ENCODE measurements at regions of chr5 and their contacts with region 1.

Region 1: DNA sequence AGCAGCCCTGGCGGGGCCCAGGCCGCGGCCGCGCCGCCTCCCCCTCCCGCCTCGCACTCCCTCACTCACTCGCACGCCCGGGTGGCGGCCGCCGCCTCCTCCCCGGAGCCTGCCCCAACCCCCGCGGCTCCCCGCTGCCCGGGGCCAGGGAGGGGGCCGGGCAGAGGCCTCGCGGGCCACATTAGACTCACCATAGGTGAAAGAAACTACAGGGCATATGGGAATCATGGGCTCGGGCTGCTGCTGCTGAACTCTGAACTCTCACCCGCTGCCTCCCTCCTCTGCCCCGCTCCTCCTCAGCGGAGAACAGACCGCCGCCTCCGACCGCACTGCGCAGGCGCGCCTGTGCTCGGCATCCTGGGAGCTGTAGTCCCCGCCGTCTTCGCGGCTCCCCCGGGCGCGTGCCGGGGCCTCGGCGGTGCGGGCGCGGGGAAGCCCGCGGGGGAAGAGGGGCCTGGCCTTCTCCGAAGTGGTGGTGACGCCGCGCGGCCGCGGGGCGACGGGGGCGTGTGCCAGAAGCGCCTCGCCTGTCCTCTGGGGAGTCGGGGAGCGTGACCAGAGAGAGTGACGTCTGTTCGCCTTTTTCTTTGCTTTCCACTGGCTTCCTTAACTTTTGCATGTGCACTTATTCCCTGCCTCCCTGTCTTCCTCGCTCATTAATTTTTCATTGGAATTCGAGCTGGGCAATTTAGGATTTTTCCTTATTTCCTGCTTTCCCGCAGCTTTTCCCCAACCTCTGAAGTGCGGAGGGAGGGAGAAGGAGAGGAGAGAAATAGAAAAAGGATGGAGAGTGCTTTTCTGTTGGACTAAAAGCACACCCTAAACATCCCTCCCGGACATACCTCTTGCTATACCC is at the start of gene ZFR:
- DNase-seq: peak; percentile 94
- ATAC-seq: peak; percentile 80
- H3K4me3 ChIP-seq: peak within 1 kb of the TSS; percentile 55 to 91 (median 76)
- H3K4me3 Mint-ChIP-seq: peak within 1 kb of the TSS; percentile 93
- H3K27ac ChIP-seq: peak within 1 kb of the TSS; percentile 88 to 92
- H3K27ac Mint-ChIP-seq: peak within 1 kb of the TSS; percentile 96
- H3K4me1 ChIP-seq: peaks cover 36 to 42% of the 10 kb centered on the region in 2 donors
- H3K4me1 Mint-ChIP-seq: peaks cover 59% of the 10 kb centered on the region
- H3K27me3 ChIP-seq: no peaks in the 10 kb centered on the region
- H3K27me3 Mint-ChIP-seq: no peaks in the 10 kb centered on the region
- CTCF ChIP-seq: no peak
- total RNA-seq, gene ZFR: 69.0 and 74.6 TPM in 2 replicates

Region 2: GRCh38 chr5:31531888-31532710 is 912.6 kb before region 1 on chr5 and contains the starts of genes C5orf22 and DROSHA:
- CTCF ChIA-PET with region 1: no interaction called
- POLR2A ChIA-PET with region 1: no interaction called
- intact Hi-C with region 1: loop called (anchors 5 kb)
- DNase-seq: peak; percentile 90
- ATAC-seq: peak; percentile 98
- H3K4me3 ChIP-seq: peak within 1 kb of the TSS; percentile 64 to 94 (median 91)
- H3K4me3 Mint-ChIP-seq: peak within 1 kb of the TSS; percentile 100
- H3K27ac ChIP-seq: peak within 1 kb of the TSS; percentile 29 to 70
- H3K27ac Mint-ChIP-seq: peak within 1 kb of the TSS; percentile 94
- H3K4me1 ChIP-seq: peaks cover 23% of the 10 kb centered on the region in 2 donors
- H3K4me1 Mint-ChIP-seq: peaks cover 38% of the 10 kb centered on the region
- H3K27me3 ChIP-seq: no peaks in the 10 kb centered on the region
- H3K27me3 Mint-ChIP-seq: no peaks in the 10 kb centered on the region
- CTCF ChIP-seq: no peak
- total RNA-seq, gene C5orf22: 28.2 and 28.9 TPM in 2 replicates
- total RNA-seq, gene DROSHA: 62.4 and 65.4 TPM in 2 replicates

Region 3: DNA sequence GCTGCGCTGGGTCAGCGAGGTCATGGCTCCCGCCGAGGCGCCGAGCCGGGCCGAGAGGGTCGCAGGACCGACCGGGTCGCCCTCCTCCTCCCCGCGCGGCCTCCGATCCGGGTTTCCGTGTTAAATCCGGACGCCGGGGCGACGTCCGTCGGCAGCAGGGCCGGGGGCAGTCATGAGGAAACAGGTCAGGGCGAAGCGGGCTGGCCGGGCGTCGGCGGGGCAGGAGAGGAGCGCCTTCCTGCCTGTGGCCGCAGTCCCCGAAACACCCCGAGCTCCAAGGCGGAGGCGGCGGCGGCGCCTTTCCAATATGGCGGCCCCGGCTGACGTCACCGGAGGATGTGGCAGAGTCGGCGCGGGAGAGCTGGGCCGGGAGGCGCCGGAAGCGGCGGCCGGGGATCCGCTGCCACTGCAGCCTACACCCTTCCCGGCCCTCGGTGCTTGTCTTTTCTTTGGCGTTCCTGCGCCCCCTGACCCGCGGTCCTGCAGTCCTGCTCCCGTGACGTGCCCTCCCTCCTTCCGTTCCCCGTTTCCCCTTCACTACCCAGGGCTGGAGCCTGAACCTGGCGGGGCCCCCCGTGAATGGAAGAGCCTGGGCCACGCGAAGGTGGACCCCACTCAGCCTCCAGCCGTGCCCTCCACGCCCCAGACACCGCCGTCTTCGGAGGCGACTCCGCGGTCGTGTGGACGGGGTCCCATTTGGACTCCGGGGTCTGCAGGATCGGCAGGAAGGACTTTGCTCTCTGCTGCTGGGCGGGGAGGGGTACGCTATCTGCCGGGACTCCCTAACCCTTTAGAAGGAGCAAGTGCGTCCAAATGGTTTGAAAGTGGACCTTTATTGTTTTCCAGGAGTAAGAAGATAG is 270.4 kb before region 1 on chr5 and contains the start of gene GOLPH3:
- CTCF ChIA-PET with region 1: no interaction called
- POLR2A ChIA-PET with region 1: interaction called, 3 read pairs
- intact Hi-C with region 1: loop called (anchors 1 kb)
- DNase-seq: peak; percentile 91
- ATAC-seq: peak; percentile 85
- H3K4me3 ChIP-seq: peak within 1 kb of the TSS; percentile 65 to 92 (median 80)
- H3K4me3 Mint-ChIP-seq: peak within 1 kb of the TSS; percentile 96
- H3K27ac ChIP-seq: peak within 1 kb of the TSS; percentile 95 to 97
- H3K27ac Mint-ChIP-seq: peak within 1 kb of the TSS; percentile 96
- H3K4me1 ChIP-seq: peaks cover 13 to 19% of the 10 kb centered on the region in 2 donors
- H3K4me1 Mint-ChIP-seq: peaks cover 36% of the 10 kb centered on the region
- H3K27me3 ChIP-seq: no peaks in the 10 kb centered on the region
- H3K27me3 Mint-ChIP-seq: no peaks in the 10 kb centered on the region
- CTCF ChIP-seq: no peak
- total RNA-seq, gene GOLPH3: 58.8 and 62.6 TPM in 2 replicates

Region 4: GRCh38 chr5:32406650-32407049 is 38.0 kb before region 1 on chr5:
- CTCF ChIA-PET with region 1: no interaction called
- POLR2A ChIA-PET with region 1: no interaction called
- intact Hi-C with region 1: loop called (anchors 5 kb)
- DNase-seq: no peak
- ATAC-seq: no peak
- H3K4me3 ChIP-seq: no peak overlapping the region
- H3K4me3 Mint-ChIP-seq: no peak overlapping the region
- H3K27ac ChIP-seq: no peak overlapping the region
- H3K27ac Mint-ChIP-seq: no peak overlapping the region
- H3K4me1 ChIP-seq: no peaks in the 10 kb centered on the region
- H3K4me1 Mint-ChIP-seq: peaks cover 2% of the 10 kb centered on the region
- H3K27me3 ChIP-seq: no peaks in the 10 kb centered on the region
- H3K27me3 Mint-ChIP-seq: no peaks in the 10 kb centered on the region
- CTCF ChIP-seq: no peak

Region 5: GRCh38 chr5:34007621-34008600 is 1563.3 kb after region 1 on chr5 and contains the start of gene AMACR:
- CTCF ChIA-PET with region 1: no interaction called
- POLR2A ChIA-PET with region 1: no interaction called
- intact Hi-C with region 1: loop called (anchors 5 kb)
- DNase-seq: peak; percentile 87
- ATAC-seq: peak; percentile 90
- H3K4me3 ChIP-seq: peak within 1 kb of the TSS; percentile 76 to 98 (median 92)
- H3K4me3 Mint-ChIP-seq: peak within 1 kb of the TSS; percentile 95
- H3K27ac ChIP-seq: peak within 1 kb of the TSS; percentile 72 to 77
- H3K27ac Mint-ChIP-seq: peak within 1 kb of the TSS; percentile 92
- H3K4me1 ChIP-seq: peaks cover 9 to 15% of the 10 kb centered on the region in 2 donors
- H3K4me1 Mint-ChIP-seq: peaks cover 22% of the 10 kb centered on the region
- H3K27me3 ChIP-seq: no peaks in the 10 kb centered on the region
- H3K27me3 Mint-ChIP-seq: no peaks in the 10 kb centered on the region
- CTCF ChIP-seq: no peak
- total RNA-seq, gene AMACR: 4.4 and 5.8 TPM in 2 replicates

Measured in B cell (primary cell).